T-cell (primary cell): ENCODE measurements at regions of chr6 and their contacts with region 1.

Region 1: DNA sequence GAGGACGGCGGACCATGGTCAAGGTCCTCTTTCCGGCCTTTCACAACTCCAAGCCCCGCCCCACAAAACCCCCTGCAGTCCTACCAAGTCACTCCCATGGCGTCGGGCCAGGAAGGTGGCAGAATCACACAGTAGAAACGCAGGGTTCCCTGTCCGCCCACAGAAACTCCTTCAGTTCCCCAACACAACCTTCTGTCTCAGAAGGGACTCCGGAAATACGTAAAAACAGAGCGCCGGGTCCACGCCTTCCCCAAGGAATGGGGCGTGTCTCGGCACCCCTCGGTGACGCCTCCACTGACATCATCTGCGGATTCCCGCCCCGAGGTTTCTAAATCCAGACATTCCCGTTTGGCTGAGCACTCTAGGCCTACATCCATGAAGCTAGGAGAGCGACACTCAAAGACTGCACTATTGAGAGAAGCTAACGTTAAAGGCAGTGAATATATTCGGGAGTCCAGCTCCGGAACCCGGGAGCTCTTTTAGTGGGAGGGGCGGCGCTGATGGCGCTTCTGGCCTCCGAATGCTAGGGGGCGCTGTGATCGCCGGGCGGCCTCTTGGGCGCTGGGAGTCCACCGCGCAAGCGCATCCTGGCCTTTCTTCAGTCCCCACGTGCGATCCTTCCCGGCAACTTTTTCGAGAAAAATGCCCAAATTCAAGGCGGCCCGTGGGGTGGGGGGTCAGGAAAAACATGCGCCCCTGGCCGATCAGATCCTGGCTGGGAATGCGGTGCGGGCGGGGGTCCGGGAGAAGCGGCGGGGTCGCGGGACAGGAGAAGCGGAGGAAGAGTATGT is at the starts of genes BYSL and MED20:
- DNase-seq: peak; percentile 86 to 96 (median 91)
- ATAC-seq: peak; percentile 89 to 91 (median 90)
- H3K4me3 ChIP-seq: peak within 1 kb of the TSS; percentile 93 to 99
- H3K4me3 Mint-ChIP-seq: peak within 1 kb of the TSS; percentile 89 to 99 (median 99)
- H3K27ac ChIP-seq: peak within 1 kb of the TSS; percentile 91
- H3K27ac Mint-ChIP-seq: peak within 1 kb of the TSS; percentile 98 to 99
- H3K4me1 ChIP-seq: peaks cover 20 to 47% of the 10 kb centered on the region in 2 experiments
- H3K4me1 Mint-ChIP-seq: peaks cover 57 to 60% (median 58%) of the 10 kb centered on the region in 3 donors
- H3K27me3 ChIP-seq: no peaks in the 10 kb centered on the region
- H3K27me3 Mint-ChIP-seq: peaks cover 0 to 2% of the 10 kb centered on the region in 2 donors
- total RNA-seq, gene BYSL: 3.5 to 20.5 (median 15.0) TPM
- total RNA-seq, gene MED20: 5.4 to 12.1 (median 11.1) TPM

Region 2: GRCh38 chr6:41787219-41787917 is 133.7 kb before region 1 on chr6 and contains the start of gene TOMM6:
- CTCF ChIA-PET with region 1: interaction called, 8 to 46 read pairs
- POLR2A ChIA-PET with region 1: interaction called in 1 of 2 experiments, 11 read pairs
- DNase-seq: peak; percentile 86 to 97 (median 93)
- ATAC-seq: peak; percentile 82 to 83 (median 82)
- H3K4me3 ChIP-seq: peak within 1 kb of the TSS; percentile 72 to 97
- H3K4me3 Mint-ChIP-seq: peak within 1 kb of the TSS; percentile 93 to 97 (median 94)
- H3K27ac ChIP-seq: peak within 1 kb of the TSS; percentile 89
- H3K27ac Mint-ChIP-seq: peak within 1 kb of the TSS; percentile 96
- H3K4me1 ChIP-seq: peaks cover 2 to 18% of the 10 kb centered on the region in 2 experiments
- H3K4me1 Mint-ChIP-seq: peaks cover 8 to 31% (median 16%) of the 10 kb centered on the region in 3 donors
- H3K27me3 ChIP-seq: peaks cover 0 to 3% of the 10 kb centered on the region in 2 experiments
- H3K27me3 Mint-ChIP-seq: no peaks in the 10 kb centered on the region
- total RNA-seq, gene TOMM6: 124 to 131 (median 127) TPM

Region 3: GRCh38 chr6:41936073-41936837 is 15.1 kb after region 1 on chr6:
- CTCF ChIA-PET with region 1: interaction called, 3 to 26 read pairs
- POLR2A ChIA-PET with region 1: interaction called in 1 of 2 experiments, 3 read pairs
- DNase-seq: peak; percentile 36 to 89 (median 75)
- ATAC-seq: peak; percentile 59 to 68 (median 66)
- H3K4me3 ChIP-seq: peak overlapping the region; percentile 9 to 35
- H3K4me3 Mint-ChIP-seq: peak overlapping the region; percentile 58 to 93 (median 66)
- H3K27ac ChIP-seq: peak overlapping the region; percentile 50
- H3K27ac Mint-ChIP-seq: peak overlapping the region; percentile 89 to 92
- H3K4me1 ChIP-seq: peaks cover 52 to 76% of the 10 kb centered on the region in 2 experiments
- H3K4me1 Mint-ChIP-seq: peaks cover 68 to 81% (median 75%) of the 10 kb centered on the region in 3 donors
- H3K27me3 ChIP-seq: no peaks in the 10 kb centered on the region
- H3K27me3 Mint-ChIP-seq: no peaks in the 10 kb centered on the region

Region 4: DNA sequence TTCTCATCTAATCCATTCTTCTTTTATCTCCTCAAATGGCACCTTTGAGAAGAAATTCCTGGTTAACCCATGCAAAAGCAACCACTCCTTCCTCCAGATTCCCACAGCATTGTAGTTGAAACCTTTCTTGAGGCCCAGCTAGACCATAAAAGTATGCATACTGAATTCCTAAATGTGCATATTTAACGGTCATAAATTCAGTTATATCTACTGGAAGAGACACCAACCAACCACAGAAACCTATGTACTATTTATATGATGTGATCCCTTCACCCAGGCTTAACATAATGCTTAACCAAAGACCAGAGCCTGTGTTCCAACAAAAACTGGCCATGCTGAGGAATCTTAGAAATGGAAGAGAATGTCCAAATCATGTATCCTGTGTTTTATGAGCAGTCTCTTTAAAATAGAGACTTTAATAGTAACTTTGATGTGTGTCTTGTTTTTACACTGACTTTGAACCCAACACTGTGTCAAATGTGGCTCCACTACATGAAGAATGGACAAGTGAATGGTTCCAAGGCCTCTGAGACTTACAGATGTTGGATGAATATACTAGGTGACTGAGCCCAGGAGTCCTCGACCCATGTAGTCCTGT is 117.8 kb after region 1 on chr6:
- CTCF ChIA-PET with region 1: interaction called, 6 to 27 read pairs
- POLR2A ChIA-PET with region 1: no interaction called
- DNase-seq: no peak
- ATAC-seq: no peak
- H3K4me3 ChIP-seq: peak overlapping the region; percentile 33 to 58
- H3K4me3 Mint-ChIP-seq: peak overlapping the region; percentile 67 to 99 (median 80)
- H3K27ac ChIP-seq: peak overlapping the region; percentile 57
- H3K27ac Mint-ChIP-seq: peak overlapping the region; percentile 95 to 96
- H3K4me1 ChIP-seq: peaks cover 50 to 97% of the 10 kb centered on the region in 2 experiments
- H3K4me1 Mint-ChIP-seq: peaks cover 67 to 84% (median 83%) of the 10 kb centered on the region in 3 donors
- H3K27me3 ChIP-seq: no peaks in the 10 kb centered on the region
- H3K27me3 Mint-ChIP-seq: no peaks in the 10 kb centered on the region

Region 5: GRCh38 chr6:42050266-42051032 is 129.3 kb after region 1 on chr6 and contains the start of gene TAF8:
- CTCF ChIA-PET with region 1: interaction called in 1 of 2 experiments, 27 read pairs
- POLR2A ChIA-PET with region 1: interaction called in 1 of 2 experiments, 6 read pairs
- DNase-seq: peak; percentile 76 to 93 (median 84)
- ATAC-seq: peak; percentile 62 to 69 (median 63)
- H3K4me3 ChIP-seq: peak within 1 kb of the TSS; percentile 80 to 98
- H3K4me3 Mint-ChIP-seq: peak within 1 kb of the TSS; percentile 93 to 99 (median 98)
- H3K27ac ChIP-seq: peak within 1 kb of the TSS; percentile 77
- H3K27ac Mint-ChIP-seq: peak within 1 kb of the TSS; percentile 97 to 98
- H3K4me1 ChIP-seq: peaks cover 19 to 59% of the 10 kb centered on the region in 2 experiments
- H3K4me1 Mint-ChIP-seq: peaks cover 60 to 72% (median 61%) of the 10 kb centered on the region in 3 donors
- H3K27me3 ChIP-seq: no peaks in the 10 kb centered on the region
- H3K27me3 Mint-ChIP-seq: no peaks in the 10 kb centered on the region
- total RNA-seq, gene TAF8: 46.0 to 55.5 (median 47.6) TPM